ENCODE measurements at regions of chr6 and their contacts with region 1.

Region 1: DNA sequence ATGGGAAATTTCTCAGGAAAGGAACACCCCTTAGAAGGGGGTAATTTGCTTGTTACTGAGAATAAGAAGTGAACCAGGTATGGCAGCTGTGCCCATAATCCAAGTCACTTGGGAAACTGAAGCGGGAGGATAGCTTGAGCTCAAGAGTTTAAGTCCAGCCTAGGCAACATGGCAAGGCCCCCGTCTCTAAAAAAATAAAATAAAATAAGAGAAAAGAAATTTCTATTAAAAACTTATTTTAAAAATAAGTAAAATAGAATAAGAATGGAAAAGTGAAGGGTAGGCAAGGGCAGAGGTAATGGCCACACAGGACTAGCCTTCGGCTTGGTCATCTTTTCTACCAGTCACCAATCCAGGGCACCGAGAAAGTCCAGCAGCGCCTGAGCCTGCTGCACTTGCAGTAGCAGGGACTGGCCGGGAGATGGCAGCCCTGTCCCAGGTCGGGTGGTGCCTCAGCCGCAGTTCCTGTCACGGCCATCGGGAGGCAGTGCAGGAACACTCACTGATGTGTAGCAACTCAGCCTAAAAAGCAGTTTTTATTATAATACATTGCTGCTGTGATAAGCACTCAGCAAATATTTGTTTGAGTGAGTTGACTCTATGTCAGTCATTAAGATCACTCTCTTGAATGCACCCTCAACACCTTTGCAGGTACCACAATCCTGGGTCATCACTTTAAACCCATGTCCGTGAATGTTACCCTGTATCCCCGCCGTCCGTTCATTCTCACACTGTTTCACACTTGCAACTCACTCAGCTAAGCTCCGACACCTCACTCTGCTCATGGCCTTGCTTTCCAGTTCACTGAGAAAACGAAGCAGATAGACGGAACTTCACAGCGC is 23.2 kb upstream of the GCM1 start:
- DNase-seq: peak; percentile 80
- H3K4me3 Mint-ChIP-seq: no peak overlapping the region
- H3K27ac Mint-ChIP-seq: no peak overlapping the region
- H3K4me1 Mint-ChIP-seq: peaks cover 17% of the 10 kb centered on the region
- H3K27me3 Mint-ChIP-seq: no peaks in the 10 kb centered on the region
- CTCF ChIP-seq: peak; percentile 100

Region 2: GRCh38 chr6:52929321-52930164 is 242.3 kb before region 1 on chr6:
- CTCF ChIA-PET with region 1: no interaction called
- POLR2A ChIA-PET with region 1: no interaction called
- intact Hi-C with region 1: no loop called
- DNase-seq: peak; percentile 93
- H3K4me3 Mint-ChIP-seq: peak overlapping the region; percentile 1
- H3K27ac Mint-ChIP-seq: peak overlapping the region; percentile 28
- H3K4me1 Mint-ChIP-seq: peaks cover 12% of the 10 kb centered on the region
- H3K27me3 Mint-ChIP-seq: no peaks in the 10 kb centered on the region
- CTCF ChIP-seq: no peak

Region 3: GRCh38 chr6:53064726-53065215 is 107.1 kb before region 1 on chr6:
- CTCF ChIA-PET with region 1: interaction called, 17 read pairs
- POLR2A ChIA-PET with region 1: no interaction called
- intact Hi-C with region 1: no loop called
- DNase-seq: peak; percentile 98
- H3K4me3 Mint-ChIP-seq: peak overlapping the region; percentile 95
- H3K27ac Mint-ChIP-seq: peak overlapping the region; percentile 88
- H3K4me1 Mint-ChIP-seq: peaks cover 23% of the 10 kb centered on the region
- H3K27me3 Mint-ChIP-seq: no peaks in the 10 kb centered on the region
- CTCF ChIP-seq: no peak

Region 4: DNA sequence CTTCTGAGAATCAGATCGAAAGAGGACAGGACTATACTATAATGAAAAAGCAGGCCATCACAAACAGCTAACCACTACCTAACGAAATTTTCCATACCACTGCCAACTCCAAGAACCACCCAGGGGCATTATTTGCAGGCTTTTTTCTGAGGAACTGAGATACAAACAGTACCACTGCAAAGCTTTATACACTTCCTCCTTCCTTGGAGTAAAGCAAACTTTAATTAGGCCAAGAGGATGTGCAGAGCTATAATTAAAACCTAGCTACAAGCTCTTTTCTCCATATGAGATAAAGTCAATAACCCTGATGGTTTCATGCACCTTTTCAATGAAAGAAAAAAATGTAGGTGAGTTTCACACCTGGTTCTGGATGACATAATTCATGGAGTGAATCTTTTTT is 108.4 kb after region 1 on chr6:
- CTCF ChIA-PET with region 1: interaction called, 11 read pairs
- POLR2A ChIA-PET with region 1: no interaction called
- intact Hi-C with region 1: no loop called
- DNase-seq: no peak
- H3K4me3 Mint-ChIP-seq: no peak overlapping the region
- H3K27ac Mint-ChIP-seq: no peak overlapping the region
- H3K4me1 Mint-ChIP-seq: no peaks in the 10 kb centered on the region
- H3K27me3 Mint-ChIP-seq: no peaks in the 10 kb centered on the region
- CTCF ChIP-seq: no peak

Region 5: DNA sequence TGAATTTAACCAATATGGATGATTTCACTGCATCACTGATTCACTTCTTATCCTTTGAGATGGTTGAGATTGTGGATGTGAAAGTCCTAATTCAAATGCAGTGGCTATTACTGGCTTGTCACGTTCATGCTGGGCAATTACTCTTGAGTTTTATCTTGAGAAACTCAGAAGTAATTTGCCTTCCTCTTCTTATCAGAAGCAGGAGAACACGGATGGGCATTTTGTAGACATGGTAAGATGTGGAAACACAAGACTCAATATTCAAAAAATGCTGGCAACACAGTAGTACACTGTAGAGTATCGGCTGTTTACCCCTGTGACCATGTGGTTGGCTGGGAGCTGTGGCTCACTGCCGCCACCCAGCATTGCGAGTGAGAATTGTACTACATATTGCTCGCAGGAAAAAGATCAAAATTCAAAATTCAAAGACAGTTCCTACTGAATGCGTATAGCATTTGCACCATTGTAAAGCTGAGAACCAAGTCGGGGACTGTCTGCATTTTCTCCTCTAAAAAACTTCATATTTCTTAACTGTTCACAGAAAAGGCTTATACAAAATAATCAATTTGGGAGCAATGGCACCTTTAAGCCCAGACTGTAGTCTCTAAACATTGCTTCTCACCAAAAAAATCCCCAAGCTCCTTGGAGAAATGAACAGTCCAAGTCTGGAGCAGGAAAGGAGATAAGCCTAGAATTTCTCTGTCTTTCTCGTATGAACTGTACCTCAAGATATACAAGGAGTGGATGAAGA is 238.9 kb after region 1 on chr6:
- CTCF ChIA-PET with region 1: interaction called, 21 read pairs
- POLR2A ChIA-PET with region 1: no interaction called
- intact Hi-C with region 1: loop called (anchors 1 kb)
- DNase-seq: peak; percentile 64
- H3K4me3 Mint-ChIP-seq: no peak overlapping the region
- H3K27ac Mint-ChIP-seq: no peak overlapping the region
- H3K4me1 Mint-ChIP-seq: no peaks in the 10 kb centered on the region
- H3K27me3 Mint-ChIP-seq: no peaks in the 10 kb centered on the region
- CTCF ChIP-seq: peak; percentile 49

Region 6: GRCh38 chr6:53464921-53465460 is 293.2 kb after region 1 on chr6:
- CTCF ChIA-PET with region 1: interaction called, 25 read pairs
- POLR2A ChIA-PET with region 1: interaction called, 8 read pairs
- intact Hi-C with region 1: no loop called
- DNase-seq: peak; percentile 95
- H3K4me3 Mint-ChIP-seq: peak overlapping the region; percentile 6
- H3K27ac Mint-ChIP-seq: peak overlapping the region; percentile 99
- H3K4me1 Mint-ChIP-seq: peaks cover 73% of the 10 kb centered on the region
- H3K27me3 Mint-ChIP-seq: no peaks in the 10 kb centered on the region
- CTCF ChIP-seq: no peak

Region 7: GRCh38 chr6:53725791-53726431 is 554.1 kb after region 1 on chr6:
- CTCF ChIA-PET with region 1: interaction called, 6 read pairs
- POLR2A ChIA-PET with region 1: no interaction called
- intact Hi-C with region 1: loop called (anchors 5 kb)
- DNase-seq: peak; percentile 75
- H3K4me3 Mint-ChIP-seq: no peak overlapping the region
- H3K27ac Mint-ChIP-seq: no peak overlapping the region
- H3K4me1 Mint-ChIP-seq: peaks cover 15% of the 10 kb centered on the region
- H3K27me3 Mint-ChIP-seq: no peaks in the 10 kb centered on the region
- CTCF ChIP-seq: peak; percentile 93

Region 8: GRCh38 chr6:53929041-53929820 is 757.4 kb after region 1 on chr6:
- CTCF ChIA-PET with region 1: no interaction called
- POLR2A ChIA-PET with region 1: no interaction called
- intact Hi-C with region 1: no loop called
- DNase-seq: peak; percentile 26
- H3K4me3 Mint-ChIP-seq: no peak overlapping the region
- H3K27ac Mint-ChIP-seq: no peak overlapping the region
- H3K4me1 Mint-ChIP-seq: peaks cover 15% of the 10 kb centered on the region
- H3K27me3 Mint-ChIP-seq: no peaks in the 10 kb centered on the region
- CTCF ChIP-seq: no peak